PC-9 (cell line): ENCODE measurements at regions of chr6 and their contacts with region 1.

Region 1: GRCh38 chr6:34392497-34393190 is at the start of gene NUDT3:
- DNase-seq: peak; percentile 83 to 92
- H3K4me3 ChIP-seq: peak within 1 kb of the TSS; percentile 99
- H3K27ac ChIP-seq: peak within 1 kb of the TSS; percentile 79
- H3K4me1 ChIP-seq: peaks cover 19% of the 10 kb centered on the region
- H3K27me3 ChIP-seq: no peaks in the 10 kb centered on the region
- CTCF ChIP-seq: peak; percentile 70
- total RNA-seq, gene NUDT3: 16.8 and 19.1 TPM in 2 replicates

Region 2: DNA sequence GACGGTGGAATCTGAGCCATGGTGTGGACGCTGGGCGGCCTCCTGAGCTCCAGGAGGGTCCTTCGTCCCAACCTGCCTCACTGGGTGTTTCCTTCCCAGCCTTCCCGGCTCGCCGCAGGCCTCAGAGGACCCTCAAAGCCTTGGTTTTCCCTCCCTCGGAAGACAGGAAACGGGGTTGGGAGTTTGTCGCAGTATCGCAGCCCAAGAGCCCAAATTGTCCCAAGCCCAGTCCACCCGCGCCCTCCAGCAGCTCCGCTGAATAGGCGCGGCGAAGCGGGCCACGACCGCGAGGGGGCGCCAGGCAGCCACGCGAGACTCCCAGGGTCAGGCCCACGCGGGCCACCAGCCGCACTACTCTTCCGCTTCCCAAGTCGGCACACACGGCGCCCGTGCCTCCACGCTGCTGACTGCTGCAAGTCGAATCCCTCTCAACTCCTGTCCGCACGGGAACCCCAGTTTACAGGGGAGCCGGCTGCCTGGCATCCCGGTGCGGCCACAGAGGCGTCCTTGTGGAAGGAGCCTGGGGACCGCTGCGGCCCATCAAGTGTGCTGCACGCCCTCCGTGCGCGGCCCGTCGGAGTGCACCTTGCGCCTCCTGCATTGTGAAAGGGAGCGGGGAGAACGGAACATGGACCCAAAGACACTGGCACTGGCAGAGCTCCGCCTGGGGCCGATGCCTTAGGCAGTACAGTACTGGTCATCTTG is 196.4 kb before region 1 on chr6:
- CTCF ChIA-PET with region 1: no interaction called
- POLR2A ChIA-PET with region 1: no interaction called
- intact Hi-C with region 1: loop called (anchors 2 kb)
- DNase-seq: peak; percentile 38 to 82
- H3K4me3 ChIP-seq: peak overlapping the region; percentile 55
- H3K27ac ChIP-seq: no peak overlapping the region
- H3K4me1 ChIP-seq: peaks cover 11% of the 10 kb centered on the region
- H3K27me3 ChIP-seq: no peaks in the 10 kb centered on the region
- CTCF ChIP-seq: peak; percentile 94